ENCODE measurements at regions of chr3 and their contacts with region 1.

Region 1: GRCh38 chr3:16433701-16434151 is 79.8 kb downstream of the RFTN1 start:
- DNase-seq: peak; percentile 74
- ATAC-seq: peak; percentile 89
- H3K4me3 ChIP-seq: no peak overlapping the region; the same call in 1 of the 2 replicates
- H3K27ac ChIP-seq: peak overlapping the region; percentile 59
- H3K4me1 ChIP-seq: peaks cover 39% of the 10 kb centered on the region
- H3K27me3 ChIP-seq: no peaks in the 10 kb centered on the region
- CTCF ChIP-seq: no peak
- EP300 ChIP-seq: peak; percentile 80 to 95
- POLR2A ChIP-seq: no peak
- RAD21 ChIP-seq: no peak; the same call in 1 of the 2 replicates

Region 2: GRCh38 chr3:16370872-16371740 is 62.6 kb before region 1 on chr3:
- CTCF ChIA-PET with region 1: interaction called, 3 read pairs
- POLR2A ChIA-PET with region 1: interaction called, 9 read pairs
- RAD21 ChIA-PET with region 1: interaction called, 11 read pairs
- SMC1A ChIA-PET with region 1: interaction called, 11 read pairs
- in situ Hi-C with region 1: no loop called
- intact Hi-C with region 1: loop called (anchors 2 kb)
- DNase-seq: no peak
- ATAC-seq: peak; percentile 41
- H3K4me3 ChIP-seq: peak overlapping the region; percentile 23; the same call in 1 of the 2 replicates
- H3K27ac ChIP-seq: peak overlapping the region; percentile 96
- H3K4me1 ChIP-seq: peaks cover 62% of the 10 kb centered on the region
- H3K27me3 ChIP-seq: no peaks in the 10 kb centered on the region
- CTCF ChIP-seq: no peak
- EP300 ChIP-seq: peak in 1 of 2 experiments; percentile 67; a peak in 3 of 4 replicates
- POLR2A ChIP-seq: no peak
- RAD21 ChIP-seq: no peak

Region 3: DNA sequence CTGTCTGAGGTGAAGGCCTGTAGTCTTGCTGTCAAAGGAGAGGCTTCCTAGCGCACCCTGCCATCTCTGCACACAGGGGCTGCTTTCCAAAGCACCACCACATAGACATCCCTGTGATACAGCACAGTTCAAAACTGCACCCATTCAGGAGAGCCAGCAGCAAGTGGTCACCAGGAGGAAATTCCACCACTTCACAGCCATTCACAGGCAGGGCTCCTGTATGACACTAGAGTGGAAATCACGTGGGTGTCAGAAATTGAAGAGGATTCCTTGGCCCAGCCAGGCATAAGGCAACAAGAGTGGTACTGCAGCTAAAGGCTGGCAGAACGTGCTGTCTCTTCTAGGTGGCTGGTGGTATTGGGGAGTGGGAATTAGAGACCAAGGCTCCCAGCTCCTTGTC is 23.1 kb before region 1 on chr3:
- CTCF ChIA-PET with region 1: interaction called, 5 read pairs
- POLR2A ChIA-PET with region 1: interaction called, 14 read pairs
- RAD21 ChIA-PET with region 1: interaction called, 6 read pairs
- SMC1A ChIA-PET with region 1: interaction called, 54 read pairs
- in situ Hi-C with region 1: no loop called
- intact Hi-C with region 1: no loop called
- DNase-seq: no peak
- ATAC-seq: no peak
- H3K4me3 ChIP-seq: no peak overlapping the region
- H3K27ac ChIP-seq: peak overlapping the region; percentile 37; the same call in 1 of the 2 replicates
- H3K4me1 ChIP-seq: peaks cover 47% of the 10 kb centered on the region
- H3K27me3 ChIP-seq: no peaks in the 10 kb centered on the region
- CTCF ChIP-seq: no peak
- EP300 ChIP-seq: no peak
- POLR2A ChIP-seq: no peak
- RAD21 ChIP-seq: no peak

Region 4: GRCh38 chr3:16482770-16483531 is 49.2 kb after region 1 on chr3:
- CTCF ChIA-PET with region 1: interaction called, 3 read pairs
- POLR2A ChIA-PET with region 1: interaction called, 13 read pairs
- RAD21 ChIA-PET with region 1: interaction called, 5 read pairs
- SMC1A ChIA-PET with region 1: interaction called, 14 read pairs
- in situ Hi-C with region 1: no loop called
- intact Hi-C with region 1: no loop called
- DNase-seq: no peak
- ATAC-seq: peak; percentile 94
- H3K4me3 ChIP-seq: no peak overlapping the region
- H3K27ac ChIP-seq: peak overlapping the region; percentile 39; the same call in 1 of the 2 replicates
- H3K4me1 ChIP-seq: peaks cover 30% of the 10 kb centered on the region
- H3K27me3 ChIP-seq: no peaks in the 10 kb centered on the region
- CTCF ChIP-seq: no peak
- EP300 ChIP-seq: no peak
- POLR2A ChIP-seq: no peak
- RAD21 ChIP-seq: 0 out of 2 replicates have a peak, but pooled peaks have one; percentile 1

Region 5: GRCh38 chr3:16504242-16504641 is 70.5 kb after region 1 on chr3:
- CTCF ChIA-PET with region 1: interaction called, 3 read pairs
- POLR2A ChIA-PET with region 1: interaction called, 20 read pairs
- RAD21 ChIA-PET with region 1: interaction called, 74 read pairs
- SMC1A ChIA-PET with region 1: interaction called, 175 read pairs
- in situ Hi-C with region 1: no loop called
- intact Hi-C with region 1: no loop called
- DNase-seq: peak; percentile 96
- ATAC-seq: peak; percentile 73
- H3K4me3 ChIP-seq: no peak overlapping the region
- H3K27ac ChIP-seq: peak overlapping the region; percentile 60
- H3K4me1 ChIP-seq: peaks cover 61% of the 10 kb centered on the region
- H3K27me3 ChIP-seq: no peaks in the 10 kb centered on the region
- CTCF ChIP-seq: no peak
- EP300 ChIP-seq: peak; percentile 91 to 92
- POLR2A ChIP-seq: no peak
- RAD21 ChIP-seq: no peak